Dorsolateral prefrontal cortex (tissue), 120 donors: ENCODE measurements at regions of chr1 and their contacts with region 1.

Region 1: GRCh38 chr1:109397538-109398342 is at the start of gene SORT1:
- DNase-seq: peak; percentile 88 to 98 (median 96)
- H3K4me3 ChIP-seq: peak within 1 kb of the TSS; percentile 53 to 94 (median 75)
- H3K27ac ChIP-seq: peak within 1 kb of the TSS; percentile 86 to 100 (median 96)
- H3K27me3 ChIP-seq: no peaks in the 10 kb centered on the region
- CTCF ChIP-seq: peak in 31 of 56 donors; percentile 5 to 47 (median 22)
- total RNA-seq, gene SORT1: 214 to 579 (median 329) TPM

Region 2: GRCh38 chr1:109099938-109100773 is 297.6 kb before region 1 on chr1:
- intact Hi-C with region 1: loop called (anchors 5 to 10 kb)
- DNase-seq: peak; percentile 91 to 97 (median 96)
- H3K4me3 ChIP-seq: peak overlapping the region; percentile 69 to 100 (median 97)
- H3K27ac ChIP-seq: peak overlapping the region; percentile 84 to 100 (median 98)
- H3K27me3 ChIP-seq: no peaks in the 10 kb centered on the region
- CTCF ChIP-seq: peak; percentile 83 to 99 (median 95)

Region 3: DNA sequence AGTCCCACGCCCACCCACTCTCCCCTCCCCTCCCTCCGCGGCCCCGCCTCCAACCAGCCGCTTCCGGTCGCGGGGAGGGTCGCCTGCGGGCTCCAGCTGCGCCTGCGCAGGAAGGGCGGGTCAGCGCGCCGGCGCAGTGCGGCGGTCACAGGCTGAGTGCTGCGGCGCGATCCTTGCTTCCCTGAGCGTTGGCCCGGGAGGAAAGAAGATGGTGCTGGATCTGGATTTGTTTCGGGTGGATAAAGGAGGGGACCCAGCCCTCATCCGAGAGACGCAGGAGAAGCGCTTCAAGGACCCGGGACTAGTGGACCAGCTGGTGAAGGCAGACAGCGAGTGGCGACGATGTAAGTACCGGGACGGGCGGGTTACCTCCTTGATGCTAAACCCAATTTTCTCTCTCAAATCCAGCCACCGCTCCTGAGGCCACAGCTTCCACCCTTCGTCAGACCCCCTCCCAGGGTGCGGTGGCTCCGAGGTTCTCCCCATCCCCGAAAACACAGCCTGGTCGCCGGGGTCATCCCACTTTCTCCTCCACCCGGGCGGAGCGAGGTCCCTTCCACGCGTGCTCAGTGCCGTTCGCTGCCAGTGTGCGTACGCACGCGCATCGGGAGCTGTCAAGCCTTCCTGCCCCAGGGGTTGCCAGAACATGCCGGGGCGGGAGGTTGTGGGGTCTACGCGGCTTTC is 183.8 kb before region 1 on chr1 and contains the start of gene SARS1:
- intact Hi-C with region 1: loop called in 1 of 2 experiments (anchors 10 kb)
- DNase-seq: peak; percentile 79 to 93 (median 85)
- H3K4me3 ChIP-seq: peak within 1 kb of the TSS; percentile 58 to 99 (median 92)
- H3K27ac ChIP-seq: peak within 1 kb of the TSS; percentile 66 to 98 (median 93)
- H3K27me3 ChIP-seq: no peaks in the 10 kb centered on the region
- CTCF ChIP-seq: peak in 12 of 56 donors; percentile 8 to 39 (median 16)
- total RNA-seq, gene SARS1: 109 to 280 (median 226) TPM

Region 4: DNA sequence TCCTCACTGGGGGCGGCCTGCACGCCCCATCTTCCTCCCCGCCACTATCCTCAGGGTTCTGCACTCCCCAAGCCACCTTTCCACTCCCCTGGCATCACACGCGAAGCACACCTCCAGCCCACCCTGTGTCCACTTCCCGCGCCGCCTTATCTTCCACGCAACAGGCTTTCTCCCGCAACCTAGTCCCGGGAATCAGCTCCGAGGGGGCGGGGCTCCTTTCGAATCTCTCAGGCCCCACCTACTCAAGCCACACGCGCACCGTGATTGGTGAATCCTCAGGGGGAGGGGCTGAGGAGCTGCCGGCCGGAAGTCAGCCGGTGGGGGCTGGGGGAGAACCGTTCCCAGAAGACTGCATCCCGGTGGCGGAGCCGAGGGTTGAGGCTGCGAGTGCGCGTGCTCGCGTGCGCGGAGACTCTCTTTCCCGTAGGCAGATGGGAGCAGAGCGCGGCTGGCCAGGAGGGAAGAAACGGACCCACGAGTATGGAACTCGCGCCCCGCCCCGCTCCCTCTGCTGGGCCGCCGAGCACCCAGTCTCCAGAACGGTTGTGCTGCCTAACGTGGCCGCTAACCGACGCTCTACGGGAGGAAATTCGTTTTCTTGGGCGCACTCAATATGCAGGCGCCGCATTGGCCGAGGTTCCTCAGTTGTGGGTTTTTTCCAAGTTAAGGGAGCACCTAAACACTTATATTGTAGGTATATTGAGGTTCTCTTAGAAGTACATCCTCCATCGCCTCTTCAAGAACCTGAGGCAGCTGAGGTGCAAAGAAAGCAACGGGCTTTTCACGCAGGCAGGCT is 114.6 kb before region 1 on chr1 and contains the start of gene PSRC1:
- intact Hi-C with region 1: loop called (anchors 1 to 2 kb)
- DNase-seq: peak; percentile 98 to 99 (median 99)
- H3K4me3 ChIP-seq: peak within 1 kb of the TSS; percentile 61 to 99 (median 84)
- H3K27ac ChIP-seq: peak within 1 kb of the TSS; percentile 46 to 100 (median 96)
- H3K27me3 ChIP-seq: no peaks in the 10 kb centered on the region
- CTCF ChIP-seq: peak in 53 of 56 donors; percentile 22 to 72 (median 54)
- total RNA-seq, gene PSRC1: 52.9 to 176 (median 79.2) TPM

Region 5: GRCh38 chr1:109312978-109313775 is 84.6 kb before region 1 on chr1:
- intact Hi-C with region 1: loop called (anchors 2 kb)
- DNase-seq: peak; percentile 37 to 95 (median 90)
- H3K4me3 ChIP-seq: peak overlapping the region in 7 of 59 donors; percentile 1 to 29 (median 17)
- H3K27ac ChIP-seq: peak overlapping the region; percentile 6 to 100 (median 97)
- H3K27me3 ChIP-seq: no peaks in the 10 kb centered on the region
- CTCF ChIP-seq: peak in 14 of 56 donors; percentile 3 to 36 (median 16)